HepG2 (cell line): ENCODE measurements at regions of chr2 and their contacts with region 1.

Region 1: DNA sequence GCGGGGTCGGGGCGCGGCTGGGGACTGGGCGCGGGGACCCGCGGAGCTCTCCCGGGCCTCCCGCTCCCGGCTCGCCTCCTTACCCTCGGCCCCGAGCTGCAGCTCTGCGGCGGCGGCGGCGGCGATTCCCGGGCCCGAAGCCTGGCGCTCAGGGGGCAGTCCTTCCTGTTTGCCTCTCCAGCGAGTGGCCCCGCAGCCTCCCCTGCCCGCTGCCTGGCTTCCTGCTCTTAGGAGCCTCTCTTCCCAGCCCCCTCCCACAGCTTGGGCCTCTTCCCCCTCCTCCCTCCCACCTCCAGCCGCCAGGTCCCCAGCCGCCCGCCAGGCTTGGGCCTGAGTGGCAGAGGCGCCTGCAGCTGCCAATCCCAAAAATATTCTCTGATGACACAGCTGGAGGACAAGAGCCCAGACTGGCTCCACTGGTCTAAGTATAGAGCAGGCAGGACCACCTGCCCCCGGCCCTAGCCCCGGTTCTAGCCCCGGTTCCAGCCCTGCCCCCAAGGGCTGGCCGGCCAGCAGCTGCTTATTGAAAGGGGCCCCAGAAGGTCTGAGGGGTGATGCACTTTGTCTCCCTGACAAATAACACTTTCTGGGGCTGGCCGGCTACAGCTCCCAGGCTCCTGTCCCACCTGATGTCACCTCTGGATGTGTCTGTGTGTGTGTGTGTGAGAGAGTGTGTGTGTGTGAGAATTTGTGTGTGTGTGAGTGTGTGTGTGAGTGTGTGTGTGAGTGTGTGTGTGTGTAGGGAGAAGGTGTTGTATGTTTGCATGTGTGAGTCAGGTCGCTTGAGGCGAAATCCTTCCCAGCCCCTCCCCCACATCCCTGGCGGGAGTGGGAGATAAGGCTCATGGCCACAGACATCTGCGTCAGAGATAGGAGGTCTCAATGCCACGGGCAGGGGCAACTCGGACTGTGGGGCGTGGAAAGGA is at the start of gene OBSL1:
- DNase-seq: peak; percentile 90
- ATAC-seq: peak; percentile 85
- H3K4me3 ChIP-seq: peak within 1 kb of the TSS; percentile 90 to 95 (median 94)
- H3K27ac ChIP-seq: peak within 1 kb of the TSS; percentile 94
- H3K4me1 ChIP-seq: peaks cover 66% of the 10 kb centered on the region
- H3K27me3 ChIP-seq: no peaks in the 10 kb centered on the region
- CTCF ChIP-seq: peak; percentile 30; the same call in 1 of the 2 replicates
- EP300 ChIP-seq: peak; percentile 17 to 69; a peak in 3 of 4 replicates
- POLR2A ChIP-seq: peak in 1 of 2 experiments; percentile 63; a peak in 1 of 4 replicates
- RAD21 ChIP-seq: no peak; the same call in 1 of the 2 replicates
- total RNA-seq, gene OBSL1: 65.4 and 86.7 TPM in 2 replicates

Region 2: GRCh38 chr2:219406861-219407230 is 164.7 kb before region 1 on chr2:
- CTCF ChIA-PET with region 1: no interaction called
- POLR2A ChIA-PET with region 1: no interaction called
- in situ Hi-C with region 1: no loop called
- intact Hi-C with region 1: no loop called
- DNase-seq: no peak
- ATAC-seq: no peak
- H3K4me3 ChIP-seq: no peak overlapping the region
- H3K27ac ChIP-seq: no peak overlapping the region
- H3K4me1 ChIP-seq: peaks cover 27% of the 10 kb centered on the region
- H3K27me3 ChIP-seq: peaks cover 3 to 32% of the 10 kb centered on the region in 2 experiments; a peak in 4 of 5 replicates
- CTCF ChIP-seq: no peak
- EP300 ChIP-seq: no peak
- POLR2A ChIP-seq: no peak
- RAD21 ChIP-seq: no peak

Region 3: DNA sequence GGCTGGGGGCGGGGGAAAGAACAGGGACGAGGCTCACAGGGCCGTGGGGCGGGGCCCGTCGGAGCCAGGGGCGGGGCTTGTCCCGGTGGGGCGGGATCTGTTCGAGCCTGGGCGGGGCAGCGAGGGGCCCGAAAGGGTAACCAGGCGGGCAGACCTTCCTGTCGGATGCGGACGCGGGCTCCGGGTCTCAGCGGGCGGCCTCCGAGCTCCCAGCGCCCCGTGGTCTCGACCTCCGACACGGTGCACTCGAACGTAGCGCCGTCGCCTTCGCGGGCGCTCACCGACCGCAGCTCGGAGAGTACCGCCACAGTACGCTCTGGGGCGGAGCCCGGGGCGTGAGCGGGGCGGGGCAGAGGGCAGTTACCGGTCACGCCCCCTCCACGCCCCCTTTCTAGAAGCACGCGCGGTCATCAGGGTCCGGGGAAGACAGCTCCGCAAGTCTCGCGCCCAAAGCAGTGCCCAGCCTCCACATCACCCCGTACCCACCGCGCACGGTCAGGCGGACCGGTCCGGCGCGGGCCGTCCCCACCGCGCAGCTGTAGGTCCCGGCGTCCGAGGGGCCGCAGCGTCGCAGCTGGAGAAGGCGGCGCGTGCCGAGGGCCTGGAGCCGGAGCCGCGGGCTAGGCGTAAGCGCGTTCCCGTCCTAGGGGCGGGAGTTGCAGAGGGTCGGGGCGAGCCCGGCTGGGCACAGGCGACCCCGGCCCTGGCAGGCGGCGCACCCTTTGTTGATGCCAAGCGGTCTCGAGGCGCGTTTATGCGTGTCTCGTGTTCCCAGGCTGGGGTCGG is 19.0 kb before region 1 on chr2:
- CTCF ChIA-PET with region 1: no interaction called
- POLR2A ChIA-PET with region 1: interaction called, 27 read pairs
- in situ Hi-C with region 1: no loop called
- intact Hi-C with region 1: no loop called
- DNase-seq: peak; percentile 79
- ATAC-seq: peak; percentile 84
- H3K4me3 ChIP-seq: peak overlapping the region; percentile 71 to 79 (median 73)
- H3K27ac ChIP-seq: peak overlapping the region; percentile 51
- H3K4me1 ChIP-seq: peaks cover 22% of the 10 kb centered on the region
- H3K27me3 ChIP-seq: no peaks in the 10 kb centered on the region
- CTCF ChIP-seq: no peak; the same call in 1 of the 2 replicates
- EP300 ChIP-seq: no peak
- POLR2A ChIP-seq: no peak
- RAD21 ChIP-seq: peak; percentile 46

Region 4: GRCh38 chr2:219560037-219560892 is 11.3 kb before region 1 on chr2:
- CTCF ChIA-PET with region 1: no interaction called
- POLR2A ChIA-PET with region 1: interaction called, 45 read pairs
- in situ Hi-C with region 1: no loop called
- intact Hi-C with region 1: no loop called
- DNase-seq: no peak
- ATAC-seq: peak; percentile 18
- H3K4me3 ChIP-seq: no peak overlapping the region
- H3K27ac ChIP-seq: no peak overlapping the region
- H3K4me1 ChIP-seq: peaks cover 35% of the 10 kb centered on the region
- H3K27me3 ChIP-seq: no peaks in the 10 kb centered on the region
- CTCF ChIP-seq: peak; percentile 62
- EP300 ChIP-seq: no peak
- POLR2A ChIP-seq: no peak
- RAD21 ChIP-seq: no peak

Region 5: GRCh38 chr2:219701847-219702634 is 130.5 kb after region 1 on chr2:
- CTCF ChIA-PET with region 1: no interaction called
- POLR2A ChIA-PET with region 1: no interaction called
- in situ Hi-C with region 1: no loop called
- intact Hi-C with region 1: no loop called
- DNase-seq: no peak
- ATAC-seq: peak; percentile 24; the same call in 1 of the 3 replicates
- H3K4me3 ChIP-seq: no peak overlapping the region
- H3K27ac ChIP-seq: no peak overlapping the region
- H3K4me1 ChIP-seq: peaks cover 12% of the 10 kb centered on the region
- H3K27me3 ChIP-seq: peaks cover 3 to 30% of the 10 kb centered on the region in 2 experiments; a peak in 3 of 5 replicates
- CTCF ChIP-seq: no peak
- EP300 ChIP-seq: no peak
- POLR2A ChIP-seq: no peak
- RAD21 ChIP-seq: no peak

Region 6: GRCh38 chr2:219929835-219930234 is 358.3 kb after region 1 on chr2:
- CTCF ChIA-PET with region 1: no interaction called
- POLR2A ChIA-PET with region 1: no interaction called
- in situ Hi-C with region 1: no loop called
- intact Hi-C with region 1: no loop called
- DNase-seq: no peak
- ATAC-seq: no peak
- H3K4me3 ChIP-seq: no peak overlapping the region
- H3K27ac ChIP-seq: no peak overlapping the region
- H3K4me1 ChIP-seq: no peaks in the 10 kb centered on the region
- H3K27me3 ChIP-seq: no peaks in the 10 kb centered on the region; a peak in 1 of 5 replicates
- CTCF ChIP-seq: no peak
- EP300 ChIP-seq: no peak
- POLR2A ChIP-seq: no peak
- RAD21 ChIP-seq: no peak

Region 7: GRCh38 chr2:221112744-221113143 is 1541.2 kb after region 1 on chr2:
- CTCF ChIA-PET with region 1: no interaction called
- POLR2A ChIA-PET with region 1: no interaction called
- in situ Hi-C with region 1: no loop called
- intact Hi-C with region 1: no loop called
- DNase-seq: no peak
- ATAC-seq: no peak
- H3K4me3 ChIP-seq: no peak overlapping the region
- H3K27ac ChIP-seq: no peak overlapping the region
- H3K4me1 ChIP-seq: no peaks in the 10 kb centered on the region
- H3K27me3 ChIP-seq: no peaks in the 10 kb centered on the region
- CTCF ChIP-seq: no peak
- EP300 ChIP-seq: no peak
- POLR2A ChIP-seq: no peak
- RAD21 ChIP-seq: no peak